T-cell (primary cell): ENCODE measurements at regions of chr12 and their contacts with region 1.

Region 1: DNA sequence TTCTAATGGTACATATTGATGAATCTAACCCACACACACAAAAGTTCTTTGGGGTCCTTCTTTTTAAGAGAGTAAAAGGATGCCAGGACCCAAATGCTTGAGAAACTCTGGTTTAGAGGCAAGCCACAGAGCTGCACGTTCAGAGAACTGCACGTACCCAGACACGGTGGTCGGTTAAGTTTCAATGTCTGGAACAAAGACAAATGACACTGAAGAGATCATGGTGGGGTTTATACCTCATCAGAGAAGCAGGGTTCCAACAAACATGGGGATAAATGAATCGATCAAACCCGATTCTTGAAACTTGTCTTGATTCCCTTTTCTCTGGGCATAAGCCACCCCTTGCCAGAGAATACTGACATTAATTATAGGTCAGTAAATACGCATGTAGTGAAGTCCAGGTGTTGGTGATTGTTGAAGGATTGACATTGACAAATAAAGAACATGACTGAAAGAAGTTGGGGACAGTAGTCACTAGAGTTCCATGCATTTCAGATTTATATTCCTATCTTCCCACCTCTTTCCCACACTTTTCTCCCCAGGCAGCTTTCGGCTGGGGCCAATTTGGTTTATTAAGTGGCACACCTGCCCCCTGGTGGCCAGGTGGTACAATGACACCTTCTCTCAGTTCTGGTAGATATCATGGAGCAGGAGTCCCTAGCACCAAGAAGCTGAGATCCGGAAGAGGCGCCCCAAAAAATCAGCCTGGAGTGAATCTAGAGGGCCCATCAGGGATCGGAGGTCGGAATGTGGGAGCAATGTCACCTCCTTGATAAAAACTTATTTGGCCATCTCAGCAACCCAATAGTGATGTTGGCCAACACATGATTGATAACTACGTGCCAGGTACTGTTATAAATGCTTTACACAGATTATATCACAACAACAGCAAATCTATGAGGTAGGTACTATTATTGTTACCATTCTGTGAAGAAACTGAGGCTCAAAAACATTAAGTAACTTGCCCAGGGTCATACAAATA is 17.8 kb upstream of the HDAC7 start:
- DNase-seq: peak in 34 of 35 experiments; percentile 23 to 85 (median 58)
- ATAC-seq: peak; percentile 34 to 49 (median 36)
- H3K4me3 ChIP-seq: no peak overlapping the region
- H3K4me3 Mint-ChIP-seq: no peak overlapping the region
- H3K27ac ChIP-seq: no peak overlapping the region
- H3K27ac Mint-ChIP-seq: peak overlapping the region; percentile 5 to 57
- H3K4me1 ChIP-seq: peaks cover 36 to 44% of the 10 kb centered on the region in 2 experiments
- H3K4me1 Mint-ChIP-seq: peaks cover 56 to 61% (median 57%) of the 10 kb centered on the region in 3 donors
- H3K27me3 ChIP-seq: no peaks in the 10 kb centered on the region
- H3K27me3 Mint-ChIP-seq: no peaks in the 10 kb centered on the region

Region 2: GRCh38 chr12:47715393-47715876 is 122.0 kb before region 1 on chr12:
- CTCF ChIA-PET with region 1: interaction called, 5 to 11 read pairs
- POLR2A ChIA-PET with region 1: no interaction called
- DNase-seq: peak; percentile 54 to 92 (median 76)
- ATAC-seq: peak; percentile 74 to 88 (median 82)
- H3K4me3 ChIP-seq: no peak overlapping the region
- H3K4me3 Mint-ChIP-seq: peak overlapping the region in 1 of 3 donors; percentile 7
- H3K27ac ChIP-seq: no peak overlapping the region
- H3K27ac Mint-ChIP-seq: peak overlapping the region; percentile 57 to 69
- H3K4me1 ChIP-seq: peaks cover 7 to 20% of the 10 kb centered on the region in 2 experiments
- H3K4me1 Mint-ChIP-seq: peaks cover 24 to 31% (median 27%) of the 10 kb centered on the region in 3 donors
- H3K27me3 ChIP-seq: no peaks in the 10 kb centered on the region
- H3K27me3 Mint-ChIP-seq: no peaks in the 10 kb centered on the region

Region 3: GRCh38 chr12:47767216-47767724 is 70.2 kb before region 1 on chr12:
- CTCF ChIA-PET with region 1: interaction called, 5 to 10 read pairs
- POLR2A ChIA-PET with region 1: interaction called in 1 of 2 experiments, 3 read pairs
- DNase-seq: peak; percentile 17 to 80 (median 58)
- ATAC-seq: peak; percentile 49 to 78 (median 72)
- H3K4me3 ChIP-seq: no peak overlapping the region
- H3K4me3 Mint-ChIP-seq: no peak overlapping the region
- H3K27ac ChIP-seq: no peak overlapping the region
- H3K27ac Mint-ChIP-seq: peak overlapping the region; percentile 32 to 34
- H3K4me1 ChIP-seq: peaks cover 0 to 15% of the 10 kb centered on the region in 2 experiments
- H3K4me1 Mint-ChIP-seq: peaks cover 2 to 19% (median 13%) of the 10 kb centered on the region in 3 donors
- H3K27me3 ChIP-seq: peaks cover 0 to 13% of the 10 kb centered on the region in 2 experiments
- H3K27me3 Mint-ChIP-seq: no peaks in the 10 kb centered on the region

Region 4: GRCh38 chr12:47779301-47779942 is 58.1 kb before region 1 on chr12:
- CTCF ChIA-PET with region 1: interaction called, 8 to 17 read pairs
- POLR2A ChIA-PET with region 1: no interaction called
- DNase-seq: peak; percentile 75 to 96 (median 89)
- ATAC-seq: peak; percentile 86 to 93 (median 88)
- H3K4me3 ChIP-seq: no peak overlapping the region
- H3K4me3 Mint-ChIP-seq: no peak overlapping the region
- H3K27ac ChIP-seq: no peak overlapping the region
- H3K27ac Mint-ChIP-seq: peak overlapping the region; percentile 11 to 65
- H3K4me1 ChIP-seq: peaks cover 0 to 17% of the 10 kb centered on the region in 2 experiments
- H3K4me1 Mint-ChIP-seq: peaks cover 13 to 16% (median 14%) of the 10 kb centered on the region in 3 donors
- H3K27me3 ChIP-seq: peaks cover 0 to 3% of the 10 kb centered on the region in 2 experiments
- H3K27me3 Mint-ChIP-seq: no peaks in the 10 kb centered on the region

Region 5: DNA sequence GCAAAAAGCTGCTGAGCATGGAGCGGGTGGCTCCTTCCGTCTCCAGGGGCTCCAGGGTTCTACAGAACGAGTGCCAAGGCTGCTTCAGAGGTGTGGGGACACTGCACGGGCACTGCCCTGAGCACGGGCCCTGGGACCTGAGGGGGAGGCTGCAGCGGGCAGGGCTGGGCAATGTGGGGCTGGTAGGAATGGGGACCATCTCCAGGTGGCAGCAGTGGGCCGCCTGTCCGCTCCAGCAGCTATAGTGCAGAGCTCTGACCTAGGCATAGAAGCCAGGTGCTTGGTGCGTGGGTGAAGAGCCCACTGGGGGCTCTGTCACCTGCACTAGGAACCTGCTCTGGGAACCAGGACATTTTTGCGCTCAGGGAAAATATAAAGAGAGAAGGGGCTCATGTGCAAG is 40.0 kb before region 1 on chr12:
- CTCF ChIA-PET with region 1: interaction called, 12 to 14 read pairs
- POLR2A ChIA-PET with region 1: no interaction called
- DNase-seq: peak in 22 of 35 experiments; percentile 22 to 67 (median 41)
- ATAC-seq: peak; percentile 63 to 88 (median 70)
- H3K4me3 ChIP-seq: no peak overlapping the region
- H3K4me3 Mint-ChIP-seq: peak overlapping the region in 1 of 3 donors; percentile 67
- H3K27ac ChIP-seq: no peak overlapping the region
- H3K27ac Mint-ChIP-seq: peak overlapping the region; percentile 70 to 80
- H3K4me1 ChIP-seq: peaks cover 14 to 50% of the 10 kb centered on the region in 2 experiments
- H3K4me1 Mint-ChIP-seq: peaks cover 36 to 37% (median 36%) of the 10 kb centered on the region in 3 donors
- H3K27me3 ChIP-seq: no peaks in the 10 kb centered on the region
- H3K27me3 Mint-ChIP-seq: no peaks in the 10 kb centered on the region

Region 6: GRCh38 chr12:47812797-47813510 is 24.5 kb before region 1 on chr12:
- CTCF ChIA-PET with region 1: interaction called, 8 to 21 read pairs
- POLR2A ChIA-PET with region 1: interaction called, 3 to 4 read pairs
- DNase-seq: peak; percentile 77 to 94 (median 89)
- ATAC-seq: peak; percentile 77 to 79 (median 79)
- H3K4me3 ChIP-seq: peak overlapping the region; percentile 59 to 70
- H3K4me3 Mint-ChIP-seq: peak overlapping the region; percentile 73 to 97 (median 80)
- H3K27ac ChIP-seq: peak overlapping the region; percentile 95
- H3K27ac Mint-ChIP-seq: peak overlapping the region; percentile 90 to 99
- H3K4me1 ChIP-seq: peaks cover 71 to 99% of the 10 kb centered on the region in 2 experiments
- H3K4me1 Mint-ChIP-seq: peaks cover 91 to 97% (median 96%) of the 10 kb centered on the region in 3 donors
- H3K27me3 ChIP-seq: no peaks in the 10 kb centered on the region
- H3K27me3 Mint-ChIP-seq: no peaks in the 10 kb centered on the region

Region 7: GRCh38 chr12:47868552-47869031 is 31.1 kb after region 1 on chr12:
- CTCF ChIA-PET with region 1: no interaction called
- POLR2A ChIA-PET with region 1: no interaction called
- DNase-seq: no peak
- ATAC-seq: no peak
- H3K4me3 ChIP-seq: no peak overlapping the region
- H3K4me3 Mint-ChIP-seq: no peak overlapping the region
- H3K27ac ChIP-seq: no peak overlapping the region
- H3K27ac Mint-ChIP-seq: no peak overlapping the region
- H3K4me1 ChIP-seq: no peaks in the 10 kb centered on the region
- H3K4me1 Mint-ChIP-seq: no peaks in the 10 kb centered on the region
- H3K27me3 ChIP-seq: no peaks in the 10 kb centered on the region
- H3K27me3 Mint-ChIP-seq: no peaks in the 10 kb centered on the region

Region 8: DNA sequence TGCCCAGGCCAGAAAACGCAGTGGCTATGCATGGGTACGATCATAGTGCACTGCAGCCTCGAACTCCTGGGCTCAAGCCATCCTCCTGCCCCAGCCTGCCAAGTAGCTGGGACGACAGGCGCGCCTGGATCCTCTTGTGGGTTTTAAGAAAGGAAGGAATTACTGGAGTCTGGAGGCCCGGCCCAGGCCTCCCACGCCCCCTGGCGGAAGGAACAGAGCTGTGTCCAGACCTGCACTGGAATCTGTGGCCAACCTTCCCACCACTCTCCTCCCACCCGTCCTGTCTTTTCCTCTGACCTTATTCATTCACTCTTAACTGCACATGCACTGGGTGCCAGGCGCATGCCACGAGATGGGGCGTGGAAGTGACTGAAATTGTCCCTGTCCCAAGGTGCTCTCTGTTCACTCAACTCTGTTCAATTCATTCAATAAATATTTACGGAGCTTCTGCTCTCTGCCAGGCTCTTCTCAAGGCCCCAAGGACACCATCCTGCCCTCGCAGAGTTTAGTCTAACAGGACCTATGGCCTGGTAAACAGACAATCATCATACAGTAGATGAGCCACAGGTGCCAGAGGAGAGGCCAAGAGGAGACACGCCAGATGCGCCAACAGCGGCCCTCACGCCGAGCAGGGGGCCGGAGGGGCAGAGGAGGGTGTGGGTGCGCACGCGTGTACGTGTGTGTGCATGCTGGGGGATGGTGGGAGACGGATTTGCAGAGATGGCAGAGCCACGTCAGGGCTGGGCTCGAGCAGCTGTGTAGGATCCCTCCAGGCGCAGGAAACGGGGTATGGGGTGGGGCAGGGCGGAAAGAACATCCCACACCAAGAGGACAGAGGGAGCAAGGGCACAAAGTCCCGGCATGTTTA is 112.2 kb after region 1 on chr12:
- CTCF ChIA-PET with region 1: no interaction called
- POLR2A ChIA-PET with region 1: no interaction called
- DNase-seq: peak in 26 of 35 experiments; percentile 8 to 63 (median 32)
- ATAC-seq: peak in 3 of 4 experiments; percentile 47 to 75 (median 50)
- H3K4me3 ChIP-seq: no peak overlapping the region
- H3K4me3 Mint-ChIP-seq: no peak overlapping the region
- H3K27ac ChIP-seq: no peak overlapping the region
- H3K27ac Mint-ChIP-seq: peak overlapping the region in 1 of 2 donors; percentile 49
- H3K4me1 ChIP-seq: no peaks in the 10 kb centered on the region
- H3K4me1 Mint-ChIP-seq: peaks cover 0 to 1% (median 0%) of the 10 kb centered on the region in 3 donors
- H3K27me3 ChIP-seq: peaks cover 0 to 34% of the 10 kb centered on the region in 2 experiments
- H3K27me3 Mint-ChIP-seq: peaks cover 8 to 11% of the 10 kb centered on the region in 2 donors

Region 9: DNA sequence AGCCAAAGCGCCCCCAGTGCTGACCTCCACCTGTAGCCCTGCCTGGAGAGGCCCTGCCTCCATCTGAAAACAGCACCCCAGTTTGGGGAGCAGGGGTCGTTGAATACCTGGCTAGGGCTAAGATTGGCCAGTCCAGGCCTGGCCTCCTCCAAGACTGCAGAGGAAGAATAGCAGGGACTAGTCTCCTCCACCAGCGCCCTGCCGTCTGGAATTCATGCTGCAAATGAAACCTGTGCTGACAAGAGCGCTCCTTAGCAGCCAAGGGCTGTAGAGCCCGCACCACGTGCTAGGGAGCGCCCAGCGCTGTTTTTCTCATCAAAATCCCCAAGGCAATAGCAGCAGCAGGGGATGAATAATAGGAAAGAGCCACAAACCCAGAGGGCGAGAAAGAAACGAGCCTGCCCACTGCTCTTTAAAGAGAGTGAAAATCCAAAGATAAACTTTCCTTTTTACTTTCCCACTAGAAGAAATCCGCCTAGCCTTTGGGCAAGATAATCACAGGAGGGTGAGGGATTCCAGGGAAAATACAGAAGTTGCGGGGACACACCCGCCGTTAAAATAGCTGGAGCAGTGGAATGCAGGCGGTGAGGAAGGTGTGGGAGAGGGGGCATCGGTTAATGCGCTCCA is 163.5 kb after region 1 on chr12:
- CTCF ChIA-PET with region 1: no interaction called
- POLR2A ChIA-PET with region 1: no interaction called
- DNase-seq: no peak
- ATAC-seq: no peak
- H3K4me3 ChIP-seq: peak overlapping the region in 1 of 2 donors; percentile 20
- H3K4me3 Mint-ChIP-seq: peak overlapping the region; percentile 69 to 85 (median 69)
- H3K27ac ChIP-seq: no peak overlapping the region
- H3K27ac Mint-ChIP-seq: no peak overlapping the region
- H3K4me1 ChIP-seq: peaks cover 0 to 48% of the 10 kb centered on the region in 2 experiments
- H3K4me1 Mint-ChIP-seq: peaks cover 31 to 41% (median 37%) of the 10 kb centered on the region in 3 donors
- H3K27me3 ChIP-seq: peaks cover 10 to 81% of the 10 kb centered on the region in 2 experiments
- H3K27me3 Mint-ChIP-seq: peaks cover 78 to 83% of the 10 kb centered on the region in 2 donors